Activated CD4-positive, alpha-beta T cell treated with anti-CD3 and anti-CD28 coated beads for 36 hours (primary cell): ENCODE measurements at regions of chr2 and their contacts with region 1.

Region 1: GRCh38 chr2:172102391-172103278 is at the start of gene DLX2:
- DNase-seq: peak; percentile 85
- ATAC-seq: peak; percentile 50
- H3K4me3 Mint-ChIP-seq: peak within 1 kb of the TSS; percentile 73
- H3K27ac Mint-ChIP-seq: peak within 1 kb of the TSS; percentile 66
- H3K4me1 Mint-ChIP-seq: peaks cover 48% of the 10 kb centered on the region
- H3K27me3 Mint-ChIP-seq: peaks cover 60% of the 10 kb centered on the region
- total RNA-seq, gene DLX2: not detected

Region 2: GRCh38 chr2:171574149-171574795 is 528.4 kb before region 1 on chr2:
- CTCF ChIA-PET with region 1: interaction called, 9 read pairs
- POLR2A ChIA-PET with region 1: no interaction called
- intact Hi-C with region 1: loop called (anchors 1 kb)
- DNase-seq: peak; percentile 91
- ATAC-seq: peak; percentile 100
- H3K4me3 Mint-ChIP-seq: no peak overlapping the region
- H3K27ac Mint-ChIP-seq: no peak overlapping the region
- H3K4me1 Mint-ChIP-seq: peaks cover 6% of the 10 kb centered on the region
- H3K27me3 Mint-ChIP-seq: no peaks in the 10 kb centered on the region

Region 3: GRCh38 chr2:171703574-171704347 is 398.9 kb before region 1 on chr2:
- CTCF ChIA-PET with region 1: interaction called, 108 read pairs
- POLR2A ChIA-PET with region 1: interaction called, 3 read pairs
- intact Hi-C with region 1: loop called (anchors 1 to 5 kb)
- DNase-seq: no peak
- ATAC-seq: no peak
- H3K4me3 Mint-ChIP-seq: no peak overlapping the region
- H3K27ac Mint-ChIP-seq: no peak overlapping the region
- H3K4me1 Mint-ChIP-seq: peaks cover 8% of the 10 kb centered on the region
- H3K27me3 Mint-ChIP-seq: no peaks in the 10 kb centered on the region

Region 4: DNA sequence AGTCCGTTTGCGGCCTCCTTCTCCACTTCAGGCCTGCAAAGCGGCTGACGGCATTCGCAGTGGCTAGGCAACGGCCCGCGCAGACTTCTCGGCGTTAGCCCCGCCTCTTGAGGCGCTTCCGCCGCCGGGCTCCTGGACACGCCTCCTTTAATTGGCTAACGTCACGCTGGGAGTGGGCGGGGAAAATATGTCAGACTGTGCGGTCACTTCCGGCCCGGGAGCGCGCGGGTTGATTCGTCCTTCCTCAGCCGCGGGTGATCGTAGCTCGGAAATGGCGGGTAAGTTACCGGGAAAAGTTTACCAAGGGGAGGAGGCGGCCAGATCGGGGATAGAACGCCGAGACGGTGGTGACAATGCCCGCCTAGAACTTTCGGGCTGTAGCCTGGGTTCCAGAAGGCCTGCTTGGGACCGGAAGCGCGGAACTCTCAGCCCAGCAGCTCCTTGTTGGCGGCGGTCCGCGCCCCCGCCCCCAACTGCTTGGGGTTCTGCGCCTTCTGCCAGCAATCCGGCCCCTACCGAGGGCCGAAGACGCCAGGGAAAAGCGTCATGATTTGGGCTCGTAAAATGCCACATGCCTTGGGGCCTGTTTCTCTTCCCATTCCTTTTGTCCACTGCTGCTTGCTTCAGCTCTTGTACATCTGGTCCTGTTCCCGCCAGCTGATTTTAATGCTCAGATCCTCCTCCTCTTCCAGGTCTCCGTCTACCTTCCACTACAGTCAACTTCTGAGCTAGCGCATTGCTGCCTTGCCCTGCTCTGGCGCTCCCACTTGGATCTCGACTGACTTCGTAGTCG is 180.2 kb before region 1 on chr2 and contains the start of gene HAT1:
- CTCF ChIA-PET with region 1: interaction called, 3 read pairs
- POLR2A ChIA-PET with region 1: interaction called, 3 read pairs
- intact Hi-C with region 1: loop called (anchors 1 to 2 kb)
- DNase-seq: peak; percentile 99
- ATAC-seq: peak; percentile 96
- H3K4me3 Mint-ChIP-seq: peak within 1 kb of the TSS; percentile 94
- H3K27ac Mint-ChIP-seq: peak within 1 kb of the TSS; percentile 98
- H3K4me1 Mint-ChIP-seq: peaks cover 38% of the 10 kb centered on the region
- H3K27me3 Mint-ChIP-seq: no peaks in the 10 kb centered on the region
- total RNA-seq, gene HAT1: 88.5 to 92.6 TPM

Region 5: GRCh38 chr2:172090044-172090961 is 12.3 kb before region 1 on chr2:
- CTCF ChIA-PET with region 1: interaction called, 93 read pairs
- POLR2A ChIA-PET with region 1: no interaction called
- intact Hi-C with region 1: loop called (anchors 1 to 2 kb)
- DNase-seq: peak; percentile 30
- ATAC-seq: no peak
- H3K4me3 Mint-ChIP-seq: no peak overlapping the region
- H3K27ac Mint-ChIP-seq: no peak overlapping the region
- H3K4me1 Mint-ChIP-seq: peaks cover 46% of the 10 kb centered on the region
- H3K27me3 Mint-ChIP-seq: peaks cover 82% of the 10 kb centered on the region

Region 6: DNA sequence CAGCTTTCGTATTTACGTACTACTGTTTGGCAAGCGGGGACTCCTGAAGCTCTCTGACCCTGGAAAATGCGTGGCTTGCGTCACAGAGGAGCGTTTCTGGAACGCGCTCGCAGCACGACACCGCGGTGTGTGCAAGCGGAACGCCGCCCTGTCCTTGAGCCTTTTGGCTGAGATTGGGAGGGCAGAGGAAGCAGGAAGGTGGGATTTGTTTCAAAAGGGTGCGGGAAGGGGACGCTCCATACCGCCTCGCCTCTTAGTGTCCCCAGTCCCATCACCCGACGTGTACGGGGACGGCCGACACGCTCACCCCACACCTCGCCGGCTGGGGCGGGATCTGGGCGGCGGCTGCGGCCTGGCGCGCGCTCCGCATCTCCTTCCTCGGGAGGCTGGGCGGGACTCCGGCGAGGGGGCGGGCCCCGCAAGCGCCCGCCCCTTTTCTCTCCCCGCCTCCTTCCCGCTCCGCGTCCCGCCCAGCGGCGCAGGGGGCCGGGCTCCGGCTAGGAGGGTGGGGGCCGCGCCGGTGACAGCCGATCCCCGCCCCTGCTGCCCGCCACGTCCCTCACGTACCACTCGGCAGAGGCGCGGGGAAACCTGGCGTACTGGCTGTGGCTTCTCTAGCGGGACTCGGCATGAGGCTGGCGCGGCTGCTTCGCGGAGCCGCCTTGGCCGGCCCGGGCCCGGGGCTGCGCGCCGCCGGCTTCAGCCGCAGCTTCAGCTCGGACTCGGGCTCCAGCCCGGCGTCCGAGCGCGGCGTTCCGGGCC is 453.1 kb after region 1 on chr2 and contains the start of gene PDK1:
- CTCF ChIA-PET with region 1: no interaction called
- POLR2A ChIA-PET with region 1: no interaction called
- intact Hi-C with region 1: loop called in 1 of 2 experiments (anchors 5 kb)
- DNase-seq: peak; percentile 96
- ATAC-seq: peak; percentile 89
- H3K4me3 Mint-ChIP-seq: peak within 1 kb of the TSS; percentile 88
- H3K27ac Mint-ChIP-seq: peak within 1 kb of the TSS; percentile 95
- H3K4me1 Mint-ChIP-seq: peaks cover 57% of the 10 kb centered on the region
- H3K27me3 Mint-ChIP-seq: peaks cover 6% of the 10 kb centered on the region
- total RNA-seq, gene PDK1: 56.8 to 85.5 TPM